Spleen (tissue), 13 donors: ENCODE measurements at regions of chr7 and their contacts with region 1.

Region 1: DNA sequence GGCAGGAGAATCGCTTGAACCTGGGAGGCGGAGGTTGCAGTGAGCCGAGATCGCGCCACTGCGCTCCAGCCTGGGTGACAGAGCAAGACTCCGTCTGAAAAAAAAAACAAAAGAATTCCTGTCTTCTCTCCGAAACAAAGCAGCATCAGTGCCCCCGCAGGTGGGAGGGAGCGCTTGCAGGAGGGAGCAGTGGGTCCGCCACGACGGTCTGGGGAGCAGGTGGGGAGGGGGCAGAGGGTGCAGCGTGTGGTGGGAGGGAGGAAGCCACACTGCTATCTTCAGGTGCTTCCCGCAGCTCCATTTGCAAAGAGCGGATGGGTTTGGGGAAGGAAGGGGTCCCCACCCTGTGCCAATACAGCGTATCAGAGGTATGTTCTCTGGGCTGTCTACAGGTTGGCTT is 31.7 kb downstream of the LIMK1 start:
- DNase-seq: no peak
- H3K4me3 ChIP-seq: no peak overlapping the region
- H3K27ac ChIP-seq: no peak overlapping the region
- H3K4me1 ChIP-seq: no peaks in the 10 kb centered on the region
- H3K27me3 ChIP-seq: no peaks in the 10 kb centered on the region
- CTCF ChIP-seq: no peak
- POLR2A ChIP-seq: no peak

Region 2: GRCh38 chr7:74155792-74156395 is 40.6 kb after region 1 on chr7:
- intact Hi-C with region 1: loop called (anchors 5 kb)
- DNase-seq: no peak
- H3K4me3 ChIP-seq: no peak overlapping the region
- H3K27ac ChIP-seq: no peak overlapping the region
- H3K4me1 ChIP-seq: no peaks in the 10 kb centered on the region
- H3K27me3 ChIP-seq: no peaks in the 10 kb centered on the region
- CTCF ChIP-seq: no peak
- POLR2A ChIP-seq: no peak